ENCODE measurements at regions of chr15 and their contacts with region 1.

Region 1: GRCh38 chr15:64883997-64884511 is 27.6 kb upstream of the ANKDD1A start:
- DNase-seq: peak; percentile 92
- H3K4me3 ChIP-seq: no peak overlapping the region
- H3K27ac ChIP-seq: peak overlapping the region; percentile 84
- H3K4me1 ChIP-seq: peaks cover 28% of the 10 kb centered on the region
- H3K27me3 ChIP-seq: no peaks in the 10 kb centered on the region
- CTCF ChIP-seq: no peak

Region 2: DNA sequence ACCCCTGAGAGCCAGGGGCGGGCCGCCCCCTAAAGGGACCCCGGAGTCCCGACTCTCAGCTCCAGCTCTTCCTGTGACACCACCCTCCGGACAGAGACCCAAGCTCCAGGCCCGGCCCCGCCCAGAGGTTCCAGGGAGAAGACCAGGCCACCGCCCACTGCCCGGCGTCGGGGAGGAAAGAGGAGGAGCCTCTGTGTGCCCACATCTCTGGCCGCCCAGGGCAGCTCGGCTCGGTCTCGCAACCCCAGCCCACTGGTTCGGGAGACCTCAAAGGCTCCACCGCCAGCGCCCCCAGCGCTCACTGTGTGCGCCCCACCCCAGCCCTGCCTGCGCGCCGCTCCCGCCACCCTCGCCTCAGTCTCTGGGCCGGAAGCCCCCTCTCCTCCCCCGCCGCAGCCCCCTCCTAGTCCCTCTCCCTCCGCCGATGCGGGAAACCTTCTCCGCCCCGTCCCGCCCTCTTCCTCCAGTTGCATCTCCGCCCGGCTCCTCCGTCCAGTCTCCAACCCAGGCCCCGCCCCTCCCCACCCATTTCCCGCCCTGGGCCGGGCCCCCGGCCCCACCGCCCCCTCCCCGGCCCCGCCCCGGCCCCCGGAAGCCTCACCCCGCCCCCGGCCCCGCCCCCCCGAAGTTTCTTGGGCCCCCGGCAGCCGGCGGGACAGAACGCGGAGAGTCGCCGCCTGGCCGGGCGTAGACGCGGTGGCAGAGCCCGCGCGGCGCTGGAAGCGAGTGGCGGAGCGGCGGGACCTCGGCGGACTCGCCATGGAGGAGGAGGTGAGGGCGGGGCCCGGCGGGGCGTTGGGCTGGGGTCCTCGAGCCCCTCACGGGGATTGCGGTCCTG is 42.6 kb before region 1 on chr15 and contains the start of gene PLEKHO2:
- CTCF ChIA-PET with region 1: no interaction called
- dilution Hi-C with region 1: no loop called
- in situ Hi-C with region 1: loop called in 1 of 2 experiments (anchors 5 kb)
- intact Hi-C with region 1: loop called (anchors 2 kb)
- DNase-seq: peak; percentile 87
- H3K4me3 ChIP-seq: peak within 1 kb of the TSS; percentile 60 to 93 (median 86)
- H3K27ac ChIP-seq: peak within 1 kb of the TSS; percentile 61
- H3K4me1 ChIP-seq: peaks cover 36% of the 10 kb centered on the region
- H3K27me3 ChIP-seq: no peaks in the 10 kb centered on the region
- CTCF ChIP-seq: no peak
- total RNA-seq, gene PLEKHO2: 6.0 to 7.5 TPM

Region 3: DNA sequence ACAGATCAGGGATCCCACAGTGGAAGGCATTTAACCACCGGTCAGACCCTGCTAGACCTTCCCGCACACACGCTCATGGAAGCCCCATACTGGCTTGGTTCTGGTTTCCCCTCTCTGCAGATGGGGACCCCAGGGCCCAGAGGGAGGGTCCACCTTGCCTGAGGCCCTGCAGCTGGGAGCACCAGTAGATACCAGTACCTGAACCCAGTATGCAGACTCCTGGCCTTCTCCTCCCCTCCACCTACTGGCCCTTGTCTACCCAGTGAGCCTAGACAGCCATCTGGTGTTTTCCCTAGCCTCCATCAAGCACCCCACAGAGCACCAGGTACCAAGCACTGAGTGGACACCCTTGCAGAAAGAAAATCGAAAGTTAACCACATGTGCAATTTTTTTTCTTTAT is 1304.4 kb after region 1 on chr15:
- CTCF ChIA-PET with region 1: no interaction called
- dilution Hi-C with region 1: no loop called
- in situ Hi-C with region 1: no loop called
- intact Hi-C with region 1: no loop called
- DNase-seq: no peak
- H3K4me3 ChIP-seq: no peak overlapping the region
- H3K27ac ChIP-seq: no peak overlapping the region
- H3K4me1 ChIP-seq: peaks cover 16% of the 10 kb centered on the region
- H3K27me3 ChIP-seq: no peaks in the 10 kb centered on the region
- CTCF ChIP-seq: no peak